K562 (cell line): ENCODE measurements at regions of chr5 and their contacts with region 1.

Region 1: GRCh38 chr5:38948501-38948900 is 102.7 kb downstream of the OSMR start:
- DNase-seq: no peak
- ATAC-seq: no peak
- H3K4me3 ChIP-seq: no peak overlapping the region
- H3K27ac ChIP-seq: no peak overlapping the region
- H3K4me1 ChIP-seq: no peaks in the 10 kb centered on the region
- H3K27me3 ChIP-seq: no peaks in the 10 kb centered on the region
- CTCF ChIP-seq: no peak
- EP300 ChIP-seq: no peak
- POLR2A ChIP-seq: no peak
- RAD21 ChIP-seq: no peak

Region 2: DNA sequence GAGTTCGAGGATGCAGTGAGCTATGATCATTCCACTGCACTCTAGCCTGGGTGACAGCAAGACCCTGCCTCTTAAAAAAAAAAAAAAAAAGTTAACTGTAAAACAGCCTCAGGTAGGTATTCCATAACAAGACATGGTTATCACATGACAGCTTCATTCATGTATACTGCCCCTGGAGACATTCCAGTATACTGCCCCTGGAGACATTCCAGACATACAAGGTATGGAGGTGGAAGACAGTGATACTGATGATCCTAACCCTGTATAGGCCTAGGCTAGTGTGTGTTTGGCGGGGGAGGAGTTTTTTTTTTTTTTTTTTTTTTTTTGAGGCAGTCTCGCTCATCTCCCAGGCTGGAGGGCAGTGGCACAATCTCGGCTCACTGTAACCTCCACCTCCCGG is 20.2 kb after region 1 on chr5:
- CTCF ChIA-PET with region 1: no interaction called
- POLR2A ChIA-PET with region 1: interaction called, 10 read pairs
- in situ Hi-C with region 1: no loop called
- intact Hi-C with region 1: no loop called
- DNase-seq: no peak
- ATAC-seq: peak; percentile 78
- H3K4me3 ChIP-seq: no peak overlapping the region
- H3K27ac ChIP-seq: no peak overlapping the region
- H3K4me1 ChIP-seq: no peaks in the 10 kb centered on the region
- H3K27me3 ChIP-seq: no peaks in the 10 kb centered on the region
- CTCF ChIP-seq: no peak
- EP300 ChIP-seq: no peak
- POLR2A ChIP-seq: no peak
- RAD21 ChIP-seq: no peak